Colonic mucosa (tissue), 4 donors: ENCODE measurements at regions of chr1 and their contacts with region 1.

Region 1: DNA sequence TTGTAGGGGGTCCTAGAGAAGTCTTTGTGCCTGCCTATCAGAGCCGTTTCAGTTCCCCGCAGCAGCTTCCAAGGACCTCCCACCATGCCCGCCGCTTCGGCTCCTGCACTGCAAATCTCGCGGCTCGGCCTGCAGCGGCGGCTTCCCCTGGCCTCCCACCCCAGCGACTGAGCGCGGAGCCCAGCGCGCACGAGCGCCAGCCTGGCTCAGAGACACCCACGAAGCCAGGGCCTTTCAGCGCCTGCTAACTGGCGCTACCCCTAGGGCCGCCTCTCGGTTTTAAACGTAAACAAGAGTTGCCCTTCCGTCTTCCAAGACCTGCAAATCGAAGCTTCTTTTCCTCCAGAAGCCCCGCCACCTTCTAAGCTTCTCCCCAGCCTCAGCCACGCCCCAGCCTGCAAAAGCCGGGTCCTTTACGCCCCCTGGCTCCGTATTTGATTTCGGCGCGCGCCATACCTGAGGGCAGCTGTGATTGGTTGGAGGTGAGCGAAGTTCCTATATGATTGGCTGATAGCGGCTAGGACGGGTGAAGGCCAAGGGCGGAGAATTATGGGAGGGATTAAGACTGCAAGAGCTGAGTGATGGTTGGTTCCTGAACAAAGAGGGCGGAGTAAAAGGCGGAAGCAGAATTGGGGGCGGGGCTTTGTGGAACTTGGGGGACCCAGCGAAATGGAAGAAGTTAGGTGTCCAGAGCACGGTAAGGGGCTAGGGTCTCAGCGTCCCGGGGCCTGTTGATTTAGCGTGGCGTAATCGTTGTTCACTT is at the start of gene TTF2:
- DNase-seq: peak; percentile 97
- H3K4me3 ChIP-seq: peak within 1 kb of the TSS; percentile 88
- H3K27ac ChIP-seq: peak within 1 kb of the TSS; percentile 77
- H3K4me1 ChIP-seq: no peaks in the 10 kb centered on the region
- H3K27me3 ChIP-seq: no peaks in the 10 kb centered on the region
- CTCF ChIP-seq: peak; percentile 19
- total RNA-seq, gene TTF2: 25.0 to 50.5 TPM

Region 2: DNA sequence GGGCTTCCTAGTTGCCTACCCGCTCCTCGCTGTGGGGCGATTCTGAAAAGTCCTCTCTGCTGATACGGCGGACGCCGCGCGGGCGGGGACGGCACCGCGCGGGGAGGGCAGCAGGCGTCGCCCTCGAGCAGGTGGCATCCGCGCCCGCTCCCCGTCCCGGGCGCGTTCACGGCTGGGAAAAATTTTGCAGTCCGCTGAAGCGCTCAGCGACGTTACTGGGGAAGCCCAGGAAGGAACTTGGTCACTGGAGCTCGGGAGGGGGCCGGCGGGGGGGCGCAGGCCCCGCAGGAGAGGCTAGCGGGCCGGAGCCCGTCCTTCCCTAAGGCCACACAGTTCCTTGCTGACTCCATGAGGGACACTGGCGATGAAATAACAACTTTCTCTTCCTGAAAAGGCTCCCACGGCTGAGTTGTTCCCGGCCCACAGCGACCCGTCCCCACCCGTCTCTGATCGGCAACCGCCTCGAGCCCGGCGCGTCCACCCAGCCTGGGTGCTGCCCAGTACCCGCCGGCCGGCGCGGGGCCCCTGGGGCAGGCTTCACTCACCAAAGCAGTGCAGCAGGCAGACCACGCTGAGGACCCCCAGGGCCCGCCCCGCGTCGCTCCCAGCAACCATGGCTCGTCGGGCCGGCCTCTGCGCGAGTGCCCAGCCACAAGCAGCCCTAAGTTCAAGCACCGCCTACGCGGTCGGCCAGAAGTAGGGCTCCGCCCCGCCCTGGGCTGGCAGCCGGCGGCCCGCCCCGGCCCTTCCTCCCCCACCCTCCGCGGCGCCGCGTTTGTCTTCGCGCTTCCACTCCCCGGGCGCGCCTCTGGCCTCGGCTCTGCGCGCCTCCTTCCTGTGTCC is 489.3 kb before region 1 on chr1 and contains the start of gene CD58:
- intact Hi-C with region 1: loop called (anchors 5 kb)
- DNase-seq: peak; percentile 93
- H3K4me3 ChIP-seq: peak within 1 kb of the TSS; percentile 66
- H3K27ac ChIP-seq: peak within 1 kb of the TSS; percentile 96
- H3K4me1 ChIP-seq: peaks cover 4% of the 10 kb centered on the region
- H3K27me3 ChIP-seq: no peaks in the 10 kb centered on the region
- CTCF ChIP-seq: peak; percentile 71
- total RNA-seq, gene CD58: 16.1 to 25.9 TPM

Region 3: DNA sequence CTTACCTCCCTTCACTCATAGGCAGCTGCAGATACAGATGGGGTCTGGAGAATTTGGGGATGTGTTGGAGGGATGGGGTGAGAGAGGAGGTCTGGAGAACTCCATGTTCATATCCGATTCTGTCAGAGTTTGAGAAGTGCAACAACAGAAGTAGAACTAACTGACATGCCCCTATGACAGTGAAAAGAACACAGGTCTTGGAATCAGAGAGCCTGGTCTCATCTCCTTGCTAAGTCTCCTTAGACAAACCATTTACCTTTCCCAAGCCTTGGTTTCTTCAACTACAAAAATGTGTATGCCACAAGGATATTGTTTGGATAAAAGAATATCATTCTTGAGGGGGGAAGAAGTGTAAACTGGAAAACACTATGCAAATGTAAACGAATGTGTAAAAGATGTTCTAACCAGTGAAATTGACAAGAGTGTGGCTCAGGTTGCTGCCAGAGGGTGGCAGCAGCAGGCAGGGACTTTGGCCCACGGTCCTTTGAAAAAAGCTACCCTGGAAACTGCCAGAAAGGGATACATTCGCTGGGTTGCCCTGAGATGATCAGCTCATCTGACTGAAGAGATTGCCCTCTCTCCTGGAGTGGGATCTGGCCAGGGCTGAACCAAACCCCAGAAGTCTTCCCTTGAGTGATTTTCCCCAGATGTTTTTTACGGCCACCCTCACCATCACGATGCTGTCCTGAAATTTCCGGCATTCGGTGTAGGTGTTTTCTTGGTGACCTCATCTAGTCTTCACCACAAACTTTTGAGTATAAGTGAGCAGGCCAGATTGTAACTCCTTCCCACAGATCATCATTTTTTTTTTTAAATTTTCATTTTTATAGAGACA is 322.6 kb before region 1 on chr1:
- intact Hi-C with region 1: loop called (anchors 5 kb)
- DNase-seq: peak; percentile 57
- H3K4me3 ChIP-seq: no peak overlapping the region
- H3K27ac ChIP-seq: peak overlapping the region; percentile 42
- H3K4me1 ChIP-seq: no peaks in the 10 kb centered on the region
- H3K27me3 ChIP-seq: no peaks in the 10 kb centered on the region
- CTCF ChIP-seq: peak; percentile 64

Region 4: DNA sequence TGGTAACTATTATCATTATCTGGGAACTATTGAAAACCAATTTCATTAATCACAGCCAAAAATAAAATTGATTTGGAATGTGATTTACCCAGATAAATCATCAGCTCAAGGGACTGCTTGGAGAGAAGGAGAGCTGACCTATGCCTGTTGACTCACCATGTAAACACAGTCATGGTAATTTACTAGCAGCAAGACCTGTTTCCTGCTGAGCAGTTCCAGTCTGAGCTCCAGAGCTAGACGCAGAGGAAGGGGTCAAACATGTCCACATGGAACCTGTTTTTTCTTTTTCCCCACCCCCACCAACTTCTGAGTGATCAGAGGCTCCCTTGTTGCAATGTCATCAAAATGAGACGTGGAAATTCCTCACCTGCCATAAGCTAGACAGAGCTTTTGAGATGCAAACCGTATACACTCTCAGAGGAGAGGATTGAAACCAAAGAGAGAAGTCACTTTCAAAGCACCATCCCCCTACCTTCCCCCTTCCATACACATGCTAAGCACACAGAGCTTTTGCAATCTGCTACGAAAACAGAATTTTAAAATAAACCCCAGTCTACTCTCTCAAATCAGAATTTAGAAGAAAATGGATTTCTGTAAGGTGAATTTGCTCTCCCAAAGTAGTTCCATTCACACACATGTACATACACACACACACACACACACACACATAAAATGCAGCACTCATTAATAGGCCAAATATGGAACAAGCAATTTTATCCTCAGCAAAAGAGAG is 206.0 kb before region 1 on chr1:
- intact Hi-C with region 1: loop called (anchors 10 kb)
- DNase-seq: peak; percentile 75
- H3K4me3 ChIP-seq: no peak overlapping the region
- H3K27ac ChIP-seq: peak overlapping the region; percentile 57
- H3K4me1 ChIP-seq: no peaks in the 10 kb centered on the region
- H3K27me3 ChIP-seq: no peaks in the 10 kb centered on the region
- CTCF ChIP-seq: no peak

Region 5: DNA sequence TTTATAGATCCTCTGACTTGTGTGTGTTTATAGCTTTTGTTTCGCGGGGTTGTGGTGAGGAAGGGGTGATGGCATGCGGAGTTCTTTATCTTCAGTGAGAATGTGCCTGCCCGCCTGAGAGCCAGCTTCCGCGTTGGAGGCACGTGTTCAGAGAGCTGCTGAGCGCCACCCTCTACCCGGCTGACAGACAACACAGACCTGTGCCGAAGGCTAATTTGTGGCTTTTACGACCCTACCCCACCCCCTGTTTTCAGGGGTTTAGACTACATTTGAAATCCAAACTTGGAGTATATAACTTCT is 72.7 kb before region 1 on chr1:
- intact Hi-C with region 1: loop called (anchors 10 kb)
- DNase-seq: peak; percentile 62
- H3K4me3 ChIP-seq: no peak overlapping the region
- H3K27ac ChIP-seq: no peak overlapping the region
- H3K4me1 ChIP-seq: peaks cover 7% of the 10 kb centered on the region
- H3K27me3 ChIP-seq: no peaks in the 10 kb centered on the region
- CTCF ChIP-seq: no peak

Region 6: DNA sequence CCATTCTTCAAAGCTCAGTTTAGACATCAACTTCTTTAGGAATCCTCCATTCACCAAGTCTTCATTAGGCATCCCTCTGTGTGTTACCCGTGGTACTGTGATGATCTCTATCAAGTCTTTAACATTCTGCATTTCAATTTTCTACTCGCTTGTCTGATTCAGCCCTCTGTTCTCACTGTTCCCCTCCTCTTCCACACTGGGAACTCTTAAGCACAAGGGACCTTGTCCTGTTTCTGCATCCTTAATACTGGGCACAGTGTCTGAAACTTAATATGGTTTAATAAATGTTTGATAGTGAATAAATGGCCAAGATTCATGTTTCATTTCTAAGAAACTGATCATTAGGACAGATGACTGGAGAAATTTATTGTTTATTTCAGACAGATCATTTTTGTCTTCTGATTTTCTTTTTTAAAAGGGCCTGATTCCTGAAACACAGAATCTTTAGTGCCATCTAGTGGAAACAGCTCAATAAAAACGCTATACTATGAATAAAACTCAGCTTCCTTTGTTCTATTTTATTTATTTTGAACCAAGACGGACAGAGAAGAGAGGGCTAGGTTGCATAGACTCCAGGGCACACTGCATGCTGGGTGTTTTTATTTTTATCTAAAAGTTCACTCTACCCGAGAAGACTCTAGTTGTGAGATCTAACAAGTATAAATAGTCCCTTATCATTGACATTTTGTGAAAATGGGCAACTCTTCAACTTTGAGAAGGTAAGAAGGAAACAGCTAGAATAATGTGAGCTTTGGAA is 68.6 kb after region 1 on chr1:
- intact Hi-C with region 1: no loop called
- DNase-seq: no peak
- H3K4me3 ChIP-seq: no peak overlapping the region
- H3K27ac ChIP-seq: no peak overlapping the region
- H3K4me1 ChIP-seq: no peaks in the 10 kb centered on the region
- H3K27me3 ChIP-seq: peaks cover 5% of the 10 kb centered on the region
- CTCF ChIP-seq: peak; percentile 36